Tibial artery (tissue), 4 donors: ENCODE measurements at regions of chr17 and their contacts with region 1.

Region 1: GRCh38 chr17:8846768-8847211 is 20.7 kb downstream of the PIK3R6 start:
- DNase-seq: no peak
- H3K4me3 ChIP-seq: no peak overlapping the region
- H3K27ac ChIP-seq: no peak overlapping the region
- H3K4me1 ChIP-seq: peaks cover 0 to 11% (median 3%) of the 10 kb centered on the region in 4 donors
- H3K27me3 ChIP-seq: peaks cover 0 to 18% of the 10 kb centered on the region in 2 donors
- CTCF ChIP-seq: no peak

Region 2: GRCh38 chr17:8488901-8489300 is 357.9 kb before region 1 on chr17:
- intact Hi-C with region 1: no loop called
- DNase-seq: peak; percentile 81
- H3K4me3 ChIP-seq: no peak overlapping the region
- H3K27ac ChIP-seq: peak overlapping the region; percentile 49 to 59
- H3K4me1 ChIP-seq: no peaks in the 10 kb centered on the region
- H3K27me3 ChIP-seq: no peaks in the 10 kb centered on the region
- CTCF ChIP-seq: no peak

Region 3: DNA sequence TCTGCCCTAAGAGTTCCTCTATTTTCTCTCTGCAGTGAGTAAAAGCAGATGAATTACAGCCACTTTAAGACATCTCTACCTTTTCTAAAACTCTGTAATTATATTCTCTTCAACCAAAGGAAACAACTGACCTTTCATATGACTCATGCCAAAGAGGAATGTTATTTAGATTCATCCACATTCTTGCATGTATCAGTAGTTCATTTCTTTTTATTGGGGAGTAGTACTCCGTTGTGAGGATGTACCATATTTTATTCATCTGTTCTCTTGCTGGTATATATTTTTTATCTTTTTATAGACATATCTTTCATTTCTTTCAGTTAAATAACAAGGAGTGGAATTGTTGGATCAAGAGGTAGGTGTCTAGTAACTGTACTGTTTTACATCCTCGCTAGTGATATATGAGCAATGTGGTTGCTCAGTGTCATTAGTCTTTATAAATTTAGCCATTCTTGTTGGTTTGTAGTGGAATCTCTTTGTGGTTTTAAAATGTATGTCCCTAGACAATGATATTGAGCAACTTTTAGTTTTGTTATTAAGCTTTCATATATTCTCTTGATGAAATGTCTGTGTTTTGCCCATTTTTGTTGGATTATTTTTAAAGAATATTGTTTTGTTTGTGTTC is 1582.7 kb after region 1 on chr17:
- intact Hi-C with region 1: loop called (anchors 10 kb)
- DNase-seq: no peak
- H3K4me3 ChIP-seq: no peak overlapping the region
- H3K27ac ChIP-seq: no peak overlapping the region
- H3K4me1 ChIP-seq: no peaks in the 10 kb centered on the region
- H3K27me3 ChIP-seq: no peaks in the 10 kb centered on the region
- CTCF ChIP-seq: no peak